ENCODE measurements at regions of chrX and their contacts with region 1.

Region 1: DNA sequence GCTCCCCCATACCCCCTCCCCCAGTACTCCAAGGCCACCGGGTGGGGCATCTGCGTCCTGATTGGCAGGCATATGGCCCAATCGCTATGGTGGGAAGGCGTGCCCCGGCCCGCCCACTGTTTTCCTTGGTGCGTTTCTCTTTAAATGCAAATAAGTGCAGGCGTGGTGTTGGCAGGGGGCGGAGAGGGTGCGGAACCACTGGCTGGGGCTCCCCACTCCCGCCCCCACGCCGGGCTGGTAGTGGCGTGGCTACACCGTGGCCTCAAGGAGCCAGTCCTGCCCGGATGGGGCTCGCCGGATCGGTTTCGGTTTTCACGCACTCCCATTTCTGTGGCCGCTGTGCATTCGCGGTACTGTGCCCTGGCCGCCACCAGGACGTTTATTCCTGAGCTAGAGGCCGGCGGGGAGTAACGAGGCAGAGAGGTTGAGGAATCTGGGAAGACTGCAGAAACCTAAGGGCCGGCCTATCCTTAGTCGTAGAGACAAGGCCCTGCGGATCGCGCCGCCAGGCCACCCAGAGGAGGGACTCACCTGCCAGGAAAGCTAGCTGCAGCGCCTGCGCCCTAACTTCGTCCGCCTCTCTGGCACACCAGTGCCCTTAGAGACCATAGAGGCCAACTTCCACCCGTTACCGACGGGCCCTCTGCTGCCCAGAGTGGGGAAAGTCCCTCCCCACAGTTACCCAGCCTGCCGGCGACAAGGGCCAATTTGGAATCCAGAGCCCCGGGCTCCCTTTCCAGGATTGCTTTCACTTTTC is 405 bp upstream of the AMER1 start:
- DNase-seq: peak; percentile 95 to 96
- ATAC-seq: peak; percentile 94
- H3K4me3 ChIP-seq: peak overlapping the region; percentile 33 to 74
- H3K27ac ChIP-seq: peak overlapping the region; percentile 18 to 85
- H3K4me1 ChIP-seq: no peaks in the 10 kb centered on the region
- H3K27me3 ChIP-seq: no peaks in the 10 kb centered on the region

Region 2: GRCh38 chrX:63506320-63506719 is 699.6 kb before region 1 on chrX:
- intact Hi-C with region 1: no loop called
- DNase-seq: no peak
- ATAC-seq: no peak
- H3K4me3 ChIP-seq: no peak overlapping the region
- H3K27ac ChIP-seq: no peak overlapping the region
- H3K4me1 ChIP-seq: no peaks in the 10 kb centered on the region
- H3K27me3 ChIP-seq: no peaks in the 10 kb centered on the region

Region 3: GRCh38 chrX:64306712-64307111 is 100.8 kb after region 1 on chrX:
- intact Hi-C with region 1: no loop called
- DNase-seq: no peak
- ATAC-seq: no peak
- H3K4me3 ChIP-seq: no peak overlapping the region
- H3K27ac ChIP-seq: no peak overlapping the region
- H3K4me1 ChIP-seq: no peaks in the 10 kb centered on the region
- H3K27me3 ChIP-seq: no peaks in the 10 kb centered on the region

Region 4: GRCh38 chrX:64394874-64395567 is 189.1 kb after region 1 on chrX and contains the start of gene MTMR8:
- intact Hi-C with region 1: loop called in 1 of 2 experiments (anchors 10 kb)
- DNase-seq: peak; percentile 83 to 91
- ATAC-seq: peak; percentile 83
- H3K4me3 ChIP-seq: peak within 1 kb of the TSS; percentile 33 to 67
- H3K27ac ChIP-seq: no peak within 1 kb of the TSS
- H3K4me1 ChIP-seq: peaks cover 0 to 4% of the 10 kb centered on the region in 2 donors
- H3K27me3 ChIP-seq: no peaks in the 10 kb centered on the region
- total RNA-seq, gene MTMR8: 4.3 to 6.0 TPM

Region 5: DNA sequence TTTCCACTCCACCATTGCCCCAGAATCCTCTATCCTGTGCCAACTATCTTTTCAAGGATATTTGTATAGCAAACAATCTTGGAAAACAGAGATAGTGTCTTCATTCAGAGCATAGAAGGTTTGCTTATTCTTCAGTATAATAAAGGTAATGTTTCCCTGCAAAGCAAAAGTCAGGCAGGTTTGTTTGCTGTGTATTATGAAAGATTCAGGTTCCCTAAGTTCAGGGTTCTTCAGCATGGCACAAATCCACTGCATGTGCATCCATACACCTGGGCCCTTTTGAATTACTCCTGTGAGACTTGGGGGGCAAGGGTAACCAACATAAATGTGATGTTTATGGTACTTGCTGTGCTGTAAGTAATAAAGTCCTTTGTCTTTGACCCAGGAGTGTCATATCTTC is 803.5 kb after region 1 on chrX:
- intact Hi-C with region 1: no loop called
- DNase-seq: no peak
- ATAC-seq: no peak
- H3K4me3 ChIP-seq: no peak overlapping the region
- H3K27ac ChIP-seq: no peak overlapping the region
- H3K4me1 ChIP-seq: no peaks in the 10 kb centered on the region
- H3K27me3 ChIP-seq: no peaks in the 10 kb centered on the region